Psoas muscle (tissue), 8 donors: ENCODE measurements at regions of chr10 and their contacts with region 1.

Region 1: GRCh38 chr10:114550756-114551635 is 107.1 kb downstream of the ABLIM1 start:
- DNase-seq: peak in 1 of 2 donors; percentile 32
- ATAC-seq: peak in 2 of 4 donors; percentile 11 to 35
- H3K4me3 ChIP-seq: no peak overlapping the region
- H3K27ac ChIP-seq: no peak overlapping the region
- H3K4me1 ChIP-seq: peaks cover 12% of the 10 kb centered on the region
- H3K27me3 ChIP-seq: no peaks in the 10 kb centered on the region
- CTCF ChIP-seq: peak; percentile 51

Region 2: GRCh38 chr10:114166084-114166483 is 384.9 kb before region 1 on chr10:
- intact Hi-C with region 1: no loop called
- DNase-seq: no peak
- ATAC-seq: no peak
- H3K4me3 ChIP-seq: no peak overlapping the region
- H3K27ac ChIP-seq: no peak overlapping the region
- H3K4me1 ChIP-seq: no peaks in the 10 kb centered on the region
- H3K27me3 ChIP-seq: no peaks in the 10 kb centered on the region
- CTCF ChIP-seq: no peak

Region 3: GRCh38 chr10:114304017-114304570 is 246.9 kb before region 1 on chr10:
- intact Hi-C with region 1: loop called in 1 of 2 experiments (anchors 5 kb)
- DNase-seq: peak; percentile 72 to 79
- ATAC-seq: peak; percentile 76 to 92 (median 86)
- H3K4me3 ChIP-seq: peak overlapping the region; percentile 49
- H3K27ac ChIP-seq: no peak overlapping the region
- H3K4me1 ChIP-seq: peaks cover 4% of the 10 kb centered on the region
- H3K27me3 ChIP-seq: no peaks in the 10 kb centered on the region
- CTCF ChIP-seq: peak; percentile 79

Region 4: GRCh38 chr10:114320249-114321116 is 230.5 kb before region 1 on chr10:
- intact Hi-C with region 1: no loop called
- DNase-seq: no peak
- ATAC-seq: peak in 1 of 4 donors; percentile 35
- H3K4me3 ChIP-seq: no peak overlapping the region
- H3K27ac ChIP-seq: no peak overlapping the region
- H3K4me1 ChIP-seq: no peaks in the 10 kb centered on the region
- H3K27me3 ChIP-seq: no peaks in the 10 kb centered on the region
- CTCF ChIP-seq: no peak

Region 5: GRCh38 chr10:114470956-114471905 is 79.8 kb before region 1 on chr10:
- intact Hi-C with region 1: loop called (anchors 2 to 10 kb)
- DNase-seq: peak; percentile 52 to 75
- ATAC-seq: peak; percentile 80 to 96 (median 89)
- H3K4me3 ChIP-seq: no peak overlapping the region
- H3K27ac ChIP-seq: no peak overlapping the region
- H3K4me1 ChIP-seq: peaks cover 3% of the 10 kb centered on the region
- H3K27me3 ChIP-seq: no peaks in the 10 kb centered on the region
- CTCF ChIP-seq: peak; percentile 96

Region 6: GRCh38 chr10:114703377-114704107 is 152.5 kb after region 1 on chr10:
- intact Hi-C with region 1: loop called in 1 of 2 experiments (anchors 5 kb)
- DNase-seq: no peak
- ATAC-seq: no peak
- H3K4me3 ChIP-seq: no peak overlapping the region
- H3K27ac ChIP-seq: no peak overlapping the region
- H3K4me1 ChIP-seq: no peaks in the 10 kb centered on the region
- H3K27me3 ChIP-seq: no peaks in the 10 kb centered on the region
- CTCF ChIP-seq: peak; percentile 48

Region 7: DNA sequence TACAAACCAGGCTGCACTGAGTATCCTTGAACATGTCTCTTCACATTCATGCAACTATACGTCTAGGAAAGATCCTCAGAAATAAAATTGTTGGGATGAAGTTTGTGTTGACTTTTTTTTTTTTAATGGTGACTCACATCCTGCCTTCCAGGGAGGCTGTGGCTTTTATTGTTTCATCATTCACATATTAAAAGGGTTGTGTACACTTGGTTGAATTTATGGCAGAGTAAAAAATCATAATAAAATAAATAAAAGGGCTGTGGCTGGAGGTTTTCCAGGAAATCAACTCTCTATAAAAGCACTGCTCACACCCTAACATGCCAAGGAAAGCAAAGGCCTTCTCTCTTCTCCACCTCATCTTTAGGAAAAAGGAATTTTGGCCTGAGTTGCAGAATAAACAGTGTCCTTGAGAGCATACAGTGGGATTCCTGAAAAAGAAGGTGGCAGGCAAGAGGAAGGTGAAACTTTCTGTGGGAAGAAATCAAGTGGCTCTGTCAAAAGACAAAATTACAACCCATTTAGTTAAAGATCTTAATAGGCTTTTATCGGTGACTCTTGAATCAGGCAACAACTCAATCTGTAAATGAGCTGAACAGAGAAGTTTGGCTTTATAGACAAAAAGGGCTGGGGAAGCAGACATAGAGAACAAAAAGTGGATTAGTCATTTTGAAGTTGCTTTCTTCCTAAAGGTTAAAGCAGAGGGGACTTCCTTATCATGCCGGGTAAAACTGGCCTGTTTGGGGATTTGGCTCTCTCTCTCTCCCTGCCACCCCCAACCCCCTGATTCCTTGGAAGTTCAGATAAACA is 229.0 kb after region 1 on chr10:
- intact Hi-C with region 1: loop called (anchors 2 kb)
- DNase-seq: no peak
- ATAC-seq: no peak
- H3K4me3 ChIP-seq: no peak overlapping the region
- H3K27ac ChIP-seq: no peak overlapping the region
- H3K4me1 ChIP-seq: no peaks in the 10 kb centered on the region
- H3K27me3 ChIP-seq: no peaks in the 10 kb centered on the region
- CTCF ChIP-seq: no peak

Region 8: GRCh38 chr10:115129752-115130151 is 578.8 kb after region 1 on chr10:
- intact Hi-C with region 1: loop called in 1 of 2 experiments (anchors 10 kb)
- DNase-seq: no peak
- ATAC-seq: peak in 3 of 4 donors; percentile 42 to 72 (median 59)
- H3K4me3 ChIP-seq: no peak overlapping the region
- H3K27ac ChIP-seq: no peak overlapping the region
- H3K4me1 ChIP-seq: no peaks in the 10 kb centered on the region
- H3K27me3 ChIP-seq: no peaks in the 10 kb centered on the region
- CTCF ChIP-seq: peak; percentile 63